Psoas muscle (tissue), 8 donors: ENCODE measurements at regions of chr10 and their contacts with region 1.

Region 1: GRCh38 chr10:7525314-7526016 is 114.6 kb upstream of the SFMBT2 start:
- DNase-seq: no peak
- ATAC-seq: peak; percentile 60 to 82 (median 70)
- H3K4me3 ChIP-seq: no peak overlapping the region
- H3K27ac ChIP-seq: no peak overlapping the region
- H3K4me1 ChIP-seq: no peaks in the 10 kb centered on the region
- H3K27me3 ChIP-seq: peaks cover 0 to 14% (median 0%) of the 10 kb centered on the region in 3 donors
- CTCF ChIP-seq: peak; percentile 76

Region 2: GRCh38 chr10:7457478-7458316 is 67.8 kb before region 1 on chr10:
- intact Hi-C with region 1: no loop called
- DNase-seq: no peak
- ATAC-seq: no peak
- H3K4me3 ChIP-seq: no peak overlapping the region
- H3K27ac ChIP-seq: no peak overlapping the region
- H3K4me1 ChIP-seq: no peaks in the 10 kb centered on the region
- H3K27me3 ChIP-seq: no peaks in the 10 kb centered on the region
- CTCF ChIP-seq: no peak

Region 3: DNA sequence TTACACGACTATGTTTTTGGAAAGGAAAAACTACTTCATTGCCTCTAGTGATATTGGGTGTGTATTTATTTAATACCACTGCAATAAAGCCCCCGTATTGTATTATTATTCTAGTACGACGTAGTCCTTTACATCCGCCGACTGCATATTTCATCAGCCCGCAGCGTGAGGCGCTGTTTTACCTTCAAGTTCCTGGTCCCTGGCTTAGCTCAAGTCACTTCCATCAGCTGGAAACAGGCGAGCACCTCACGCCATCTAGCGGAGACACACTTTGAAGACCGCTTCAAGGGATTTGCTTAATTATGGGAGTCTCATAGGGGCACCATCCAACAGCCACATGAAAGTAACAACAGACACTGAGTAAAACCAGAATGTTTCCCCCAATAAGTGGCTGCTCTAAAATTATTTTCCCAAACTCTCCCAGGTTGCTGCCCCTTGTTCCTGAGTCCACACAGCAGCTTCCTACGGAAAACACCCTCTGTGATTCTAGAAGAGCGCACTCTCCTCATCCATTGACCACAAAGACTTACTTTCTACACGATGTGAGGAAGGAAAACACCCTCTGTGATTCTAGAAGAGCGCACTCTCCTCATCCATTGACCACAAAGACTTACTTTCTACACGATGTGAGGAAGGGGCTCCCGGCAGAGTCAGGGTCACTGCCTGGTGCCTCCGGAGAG is 161.9 kb after region 1 on chr10:
- intact Hi-C with region 1: loop called (anchors 2 kb)
- DNase-seq: peak; percentile 76 to 80
- ATAC-seq: peak; percentile 52 to 82 (median 75)
- H3K4me3 ChIP-seq: no peak overlapping the region
- H3K27ac ChIP-seq: no peak overlapping the region
- H3K4me1 ChIP-seq: no peaks in the 10 kb centered on the region
- H3K27me3 ChIP-seq: no peaks in the 10 kb centered on the region
- CTCF ChIP-seq: peak; percentile 76

Region 4: GRCh38 chr10:9302120-9302746 is 1776.8 kb after region 1 on chr10:
- intact Hi-C with region 1: loop called (anchors 10 kb)
- DNase-seq: no peak
- ATAC-seq: no peak
- H3K4me3 ChIP-seq: no peak overlapping the region
- H3K27ac ChIP-seq: no peak overlapping the region
- H3K4me1 ChIP-seq: no peaks in the 10 kb centered on the region
- H3K27me3 ChIP-seq: no peaks in the 10 kb centered on the region
- CTCF ChIP-seq: peak; percentile 40